Panc1 (cell line): ENCODE measurements at regions of chr20 and their contacts with region 1.

Region 1: DNA sequence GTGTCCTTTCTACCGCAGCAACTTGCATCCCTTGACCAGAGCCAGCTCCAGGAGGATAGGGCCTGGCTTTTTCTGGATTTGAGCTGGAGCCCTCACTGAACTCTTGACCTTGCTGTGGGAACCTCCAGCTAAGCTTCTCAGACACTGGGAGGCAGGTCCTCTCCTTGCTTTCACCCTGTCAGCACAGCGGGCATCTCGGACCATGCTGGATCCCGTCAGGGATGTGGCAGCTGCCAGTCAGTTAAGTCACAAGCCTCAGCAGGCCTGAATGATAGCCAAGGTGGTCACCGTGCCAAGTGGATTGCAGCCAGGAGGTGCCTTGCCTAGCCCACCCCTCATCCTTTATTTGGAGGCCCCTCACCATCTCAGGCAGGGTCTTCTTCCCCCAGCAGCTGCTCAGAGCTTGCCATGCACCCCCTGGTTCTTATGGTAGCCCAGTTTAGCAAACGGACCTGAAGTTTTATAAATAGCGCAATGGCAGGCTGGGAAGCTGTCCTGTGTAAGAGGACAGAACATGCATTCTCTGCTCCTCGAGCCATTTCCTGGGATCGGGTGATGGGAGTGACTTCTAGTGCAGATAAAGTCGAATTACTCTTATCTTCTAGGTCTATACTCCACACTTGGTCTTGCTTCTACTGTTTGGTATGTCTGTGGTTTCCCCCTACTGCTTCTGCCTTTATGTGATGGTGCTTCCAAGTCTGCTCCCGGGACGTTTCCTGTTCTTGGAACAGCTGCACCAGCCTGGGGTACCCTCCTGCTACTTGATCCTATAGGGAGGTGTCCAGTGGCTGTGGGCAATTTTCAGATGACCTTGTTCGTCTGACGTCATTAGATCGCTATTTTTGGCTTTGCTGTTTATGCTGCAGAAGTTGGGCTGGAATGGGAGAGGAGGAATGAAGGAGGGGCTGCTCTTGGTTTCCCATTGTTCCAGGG is 7.1 kb upstream of the MYLK2 start:
- DNase-seq: no peak
- ATAC-seq: peak; percentile 7; the same call in 1 of the 2 replicates
- H3K4me3 ChIP-seq: no peak overlapping the region
- H3K27ac ChIP-seq: no peak overlapping the region
- H3K4me1 ChIP-seq: peaks cover 40% of the 10 kb centered on the region
- H3K27me3 ChIP-seq: no peaks in the 10 kb centered on the region
- CTCF ChIP-seq: no peak

Region 2: GRCh38 chr20:32249030-32249738 is 437.1 kb after region 1 on chr20:
- CTCF ChIA-PET with region 1: no interaction called
- POLR2A ChIA-PET with region 1: no interaction called
- in situ Hi-C with region 1: no loop called
- intact Hi-C with region 1: no loop called
- DNase-seq: no peak
- ATAC-seq: no peak
- H3K4me3 ChIP-seq: no peak overlapping the region
- H3K27ac ChIP-seq: no peak overlapping the region
- H3K4me1 ChIP-seq: peaks cover 9% of the 10 kb centered on the region
- H3K27me3 ChIP-seq: no peaks in the 10 kb centered on the region
- CTCF ChIP-seq: no peak

Region 3: DNA sequence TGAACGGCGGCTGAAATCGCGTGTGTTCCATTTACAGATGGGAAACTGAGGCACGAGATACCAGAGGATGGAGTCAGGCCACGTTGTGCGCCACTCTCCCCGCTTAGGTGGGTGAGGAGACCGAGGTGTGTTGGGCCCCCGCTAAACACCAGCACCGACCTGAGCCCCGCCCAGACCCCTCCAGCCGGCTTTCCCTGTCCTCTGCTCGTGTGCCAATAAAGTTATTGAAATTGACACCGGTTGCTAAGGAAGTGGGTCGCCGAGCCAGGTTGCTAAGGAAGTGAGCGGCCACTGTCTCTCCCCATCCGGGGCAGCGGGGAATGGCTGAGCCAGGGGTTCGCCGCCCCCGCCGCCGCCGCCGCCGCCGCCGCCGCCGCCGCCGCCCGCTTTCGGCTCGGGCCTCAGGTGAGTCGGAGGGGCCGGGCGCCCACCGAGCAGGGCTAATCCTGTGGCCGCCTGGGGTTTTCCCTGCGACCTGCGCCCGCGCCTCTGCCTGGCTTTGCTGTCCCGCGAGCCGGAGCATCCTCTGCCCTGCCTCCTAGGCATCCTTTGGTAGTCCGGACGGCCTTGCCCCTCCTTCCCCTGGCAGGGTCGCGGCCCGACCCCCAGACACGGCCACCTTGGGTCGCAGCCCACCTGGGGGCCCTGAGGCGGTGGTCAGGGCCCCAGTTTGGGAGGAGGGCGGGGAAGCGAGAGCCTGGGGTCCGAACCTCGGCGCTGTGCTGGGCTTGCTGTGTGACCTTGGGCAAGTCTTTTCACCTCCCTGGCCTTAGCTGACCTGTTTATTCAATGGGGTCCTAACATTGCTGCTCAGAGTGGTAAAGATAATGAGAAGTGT is 465.5 kb after region 1 on chr20 and contains the start of gene KIF3B:
- CTCF ChIA-PET with region 1: no interaction called
- POLR2A ChIA-PET with region 1: interaction called, 13 read pairs
- in situ Hi-C with region 1: no loop called
- intact Hi-C with region 1: no loop called
- DNase-seq: peak; percentile 83
- ATAC-seq: peak; percentile 99
- H3K4me3 ChIP-seq: peak within 1 kb of the TSS; percentile 72 to 91
- H3K27ac ChIP-seq: peak within 1 kb of the TSS; percentile 92
- H3K4me1 ChIP-seq: peaks cover 17% of the 10 kb centered on the region
- H3K27me3 ChIP-seq: no peaks in the 10 kb centered on the region
- CTCF ChIP-seq: no peak
- total RNA-seq, gene KIF3B: 67.8 TPM